Activated CD8-positive, alpha-beta T cell treated with anti-CD3 and anti-CD28 coated beads for 36 hours (primary cell): ENCODE measurements at regions of chr6 and their contacts with region 1.

Region 1: DNA sequence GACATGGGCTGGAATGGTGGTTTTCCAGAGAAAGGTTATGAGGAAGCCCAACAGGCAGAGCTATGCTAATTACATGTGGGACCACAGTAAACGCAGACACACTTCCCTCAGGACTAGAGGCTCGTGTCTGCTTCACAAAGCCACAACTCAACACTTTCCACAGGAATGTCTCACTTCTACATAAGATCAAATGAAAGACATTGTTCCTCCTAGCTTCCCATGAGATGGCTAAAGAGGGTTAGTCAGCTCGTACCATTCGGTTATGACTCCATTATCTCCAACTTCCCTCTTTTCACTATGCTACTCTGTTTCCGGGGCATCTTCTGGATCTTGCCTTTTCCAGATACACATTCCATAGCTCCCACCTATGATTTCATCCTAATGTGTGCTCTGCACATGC is 29.1 kb upstream of the ZC3H12D start:
- DNase-seq: no peak
- ATAC-seq: no peak
- H3K4me3 Mint-ChIP-seq: no peak overlapping the region
- H3K27ac Mint-ChIP-seq: no peak overlapping the region
- H3K4me1 Mint-ChIP-seq: peaks cover 51% of the 10 kb centered on the region
- H3K27me3 Mint-ChIP-seq: no peaks in the 10 kb centered on the region
- CTCF ChIP-seq: no peak

Region 2: DNA sequence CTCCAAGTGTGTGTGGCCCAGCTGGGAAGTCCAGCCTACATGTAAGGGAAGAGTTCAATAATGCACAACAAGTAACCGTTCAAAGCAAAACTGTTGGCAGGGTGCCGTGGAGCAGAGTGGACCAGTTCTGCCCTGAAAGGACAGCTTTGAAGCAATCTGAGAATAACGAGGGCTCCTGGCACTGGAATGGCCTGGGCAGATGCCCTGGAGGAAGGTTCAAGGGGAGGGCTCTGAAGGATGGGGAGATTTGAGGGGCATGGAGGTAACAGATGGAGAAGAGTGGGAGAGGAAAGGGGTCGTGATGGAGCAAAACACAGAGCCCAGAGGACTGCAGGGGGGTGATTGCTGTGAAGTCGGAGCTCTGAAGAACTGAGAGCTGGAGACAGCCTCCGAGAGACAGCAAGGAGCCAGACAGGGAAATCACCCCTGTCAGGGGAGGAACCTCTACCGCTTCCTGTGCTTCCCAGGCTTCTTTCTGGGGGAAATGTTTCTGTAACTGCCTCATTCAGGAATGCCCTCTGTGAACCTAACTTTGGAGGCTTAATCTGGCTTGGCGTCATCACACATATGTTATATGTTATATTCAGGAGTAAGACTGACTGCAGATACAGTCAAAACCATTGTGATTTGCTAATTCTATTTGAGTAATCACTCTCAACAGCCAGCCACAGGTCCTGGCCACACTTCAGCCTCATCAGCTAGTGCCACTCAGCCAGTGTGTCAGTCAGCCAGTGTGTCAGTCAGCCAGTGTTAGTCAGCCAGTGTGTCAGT is 70.3 kb before region 1 on chr6:
- CTCF ChIA-PET with region 1: interaction called, 43 read pairs
- POLR2A ChIA-PET with region 1: no interaction called
- intact Hi-C with region 1: loop called (anchors 5 kb)
- DNase-seq: no peak
- ATAC-seq: peak; percentile 24
- H3K4me3 Mint-ChIP-seq: no peak overlapping the region
- H3K27ac Mint-ChIP-seq: no peak overlapping the region
- H3K4me1 Mint-ChIP-seq: peaks cover 9% of the 10 kb centered on the region
- H3K27me3 Mint-ChIP-seq: no peaks in the 10 kb centered on the region
- CTCF ChIP-seq: no peak

Region 3: DNA sequence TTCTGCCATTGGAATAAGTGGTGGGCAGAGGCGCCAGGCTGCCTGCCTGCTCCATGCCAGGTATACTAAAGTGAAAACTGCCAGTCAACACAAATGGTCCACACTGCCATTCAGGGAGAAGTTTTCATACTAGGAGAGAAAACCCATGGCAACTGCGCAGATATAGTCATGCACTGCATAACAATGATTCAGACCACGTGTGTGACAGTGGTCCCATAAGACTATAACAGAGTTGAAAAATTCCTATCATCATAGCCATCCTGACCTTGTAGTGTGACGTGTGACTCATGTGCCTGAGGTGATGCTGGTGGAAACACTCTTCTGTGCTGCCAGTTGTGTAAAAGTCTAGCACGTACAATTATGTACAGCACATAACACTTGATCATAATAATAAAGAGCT is 54.2 kb before region 1 on chr6:
- CTCF ChIA-PET with region 1: interaction called, 14 read pairs
- POLR2A ChIA-PET with region 1: interaction called, 3 read pairs
- intact Hi-C with region 1: no loop called
- DNase-seq: no peak
- ATAC-seq: no peak
- H3K4me3 Mint-ChIP-seq: no peak overlapping the region
- H3K27ac Mint-ChIP-seq: no peak overlapping the region
- H3K4me1 Mint-ChIP-seq: peaks cover 16% of the 10 kb centered on the region
- H3K27me3 Mint-ChIP-seq: no peaks in the 10 kb centered on the region
- CTCF ChIP-seq: no peak

Region 4: GRCh38 chr6:149484733-149485700 is 28.9 kb before region 1 on chr6 and contains the start of gene ZC3H12D:
- CTCF ChIA-PET with region 1: interaction called, 14 read pairs
- POLR2A ChIA-PET with region 1: interaction called, 12 read pairs
- intact Hi-C with region 1: loop called (anchors 2 kb)
- DNase-seq: peak; percentile 92
- ATAC-seq: peak; percentile 77
- H3K4me3 Mint-ChIP-seq: peak within 1 kb of the TSS; percentile 85
- H3K27ac Mint-ChIP-seq: peak within 1 kb of the TSS; percentile 99
- H3K4me1 Mint-ChIP-seq: peaks cover 74% of the 10 kb centered on the region
- H3K27me3 Mint-ChIP-seq: no peaks in the 10 kb centered on the region
- CTCF ChIP-seq: peak; percentile 39
- total RNA-seq, gene ZC3H12D: 37.7 to 39.0 TPM

Region 5: GRCh38 chr6:149529650-149530049 is 15.7 kb after region 1 on chr6:
- CTCF ChIA-PET with region 1: interaction called, 25 read pairs
- POLR2A ChIA-PET with region 1: no interaction called
- intact Hi-C with region 1: no loop called
- DNase-seq: no peak
- ATAC-seq: no peak
- H3K4me3 Mint-ChIP-seq: no peak overlapping the region
- H3K27ac Mint-ChIP-seq: peak overlapping the region; percentile 16
- H3K4me1 Mint-ChIP-seq: peaks cover 13% of the 10 kb centered on the region
- H3K27me3 Mint-ChIP-seq: no peaks in the 10 kb centered on the region
- CTCF ChIP-seq: no peak